ENCODE measurements at regions of chr13 and their contacts with region 1.

Region 1: GRCh38 chr13:20435616-20436368 is 89.9 kb downstream of the CRYL1 start:
- DNase-seq: no peak
- ATAC-seq: peak in 4 of 8 donors; percentile 7 to 54 (median 14)
- H3K4me3 ChIP-seq: no peak overlapping the region
- H3K27ac ChIP-seq: no peak overlapping the region
- H3K4me1 ChIP-seq: peaks cover 0 to 2% (median 0%) of the 10 kb centered on the region in 9 donors
- H3K27me3 ChIP-seq: no peaks in the 10 kb centered on the region
- CTCF ChIP-seq: no peak

Region 2: DNA sequence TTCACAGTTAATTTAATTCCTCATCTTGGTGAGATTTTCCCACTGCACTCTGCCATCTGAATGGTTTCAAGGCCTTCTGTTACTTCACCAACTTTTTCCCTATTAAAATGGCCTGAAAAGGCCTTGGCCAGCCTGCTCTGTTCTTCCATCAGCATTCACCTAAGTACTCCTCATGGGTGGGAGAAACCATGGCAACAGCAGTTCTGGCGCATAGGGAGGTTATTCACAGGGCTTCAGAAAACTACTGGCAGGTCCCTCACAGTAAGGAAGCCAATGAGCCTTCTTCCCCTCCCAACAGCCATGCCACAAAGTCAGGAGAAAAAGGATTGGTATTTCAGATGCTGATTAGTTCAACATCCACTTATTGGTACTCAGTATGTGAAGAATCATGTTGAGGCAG is 225.8 kb before region 1 on chr13:
- intact Hi-C with region 1: no loop called
- DNase-seq: no peak
- ATAC-seq: no peak
- H3K4me3 ChIP-seq: no peak overlapping the region
- H3K27ac ChIP-seq: no peak overlapping the region
- H3K4me1 ChIP-seq: no peaks in the 10 kb centered on the region
- H3K27me3 ChIP-seq: peaks cover 0 to 28% (median 16%) of the 10 kb centered on the region in 7 donors
- CTCF ChIP-seq: no peak

Region 3: GRCh38 chr13:20301403-20302071 is 134.3 kb before region 1 on chr13:
- intact Hi-C with region 1: no loop called
- DNase-seq: peak; percentile 12 to 20
- ATAC-seq: peak in 6 of 8 donors; percentile 23 to 53 (median 43)
- H3K4me3 ChIP-seq: peak overlapping the region in 8 of 10 donors; percentile 19 to 47 (median 42)
- H3K27ac ChIP-seq: no peak overlapping the region
- H3K4me1 ChIP-seq: peaks cover 0 to 9% (median 6%) of the 10 kb centered on the region in 9 donors
- H3K27me3 ChIP-seq: peaks cover 0 to 45% (median 34%) of the 10 kb centered on the region in 7 donors
- CTCF ChIP-seq: no peak

Region 4: GRCh38 chr13:20378721-20379120 is 57.1 kb before region 1 on chr13:
- intact Hi-C with region 1: no loop called
- DNase-seq: no peak
- ATAC-seq: no peak
- H3K4me3 ChIP-seq: no peak overlapping the region
- H3K27ac ChIP-seq: no peak overlapping the region
- H3K4me1 ChIP-seq: no peaks in the 10 kb centered on the region
- H3K27me3 ChIP-seq: no peaks in the 10 kb centered on the region
- CTCF ChIP-seq: no peak

Region 5: GRCh38 chr13:20457670-20458069 is 21.9 kb after region 1 on chr13:
- intact Hi-C with region 1: loop called in 1 of 10 experiments (anchors 2 kb)
- DNase-seq: no peak
- ATAC-seq: peak in 5 of 8 donors; percentile 28 to 67 (median 45)
- H3K4me3 ChIP-seq: no peak overlapping the region
- H3K27ac ChIP-seq: peak overlapping the region in 3 of 10 donors; percentile 1 to 48 (median 33)
- H3K4me1 ChIP-seq: peaks cover 0 to 40% (median 19%) of the 10 kb centered on the region in 9 donors
- H3K27me3 ChIP-seq: no peaks in the 10 kb centered on the region
- CTCF ChIP-seq: no peak

Region 6: GRCh38 chr13:21202764-21203538 is 767.2 kb after region 1 on chr13:
- intact Hi-C with region 1: no loop called
- DNase-seq: no peak
- ATAC-seq: no peak
- H3K4me3 ChIP-seq: no peak overlapping the region
- H3K27ac ChIP-seq: no peak overlapping the region
- H3K4me1 ChIP-seq: no peaks in the 10 kb centered on the region
- H3K27me3 ChIP-seq: no peaks in the 10 kb centered on the region
- CTCF ChIP-seq: no peak